ENCODE measurements at regions of chr7 and their contacts with region 1.

Region 1: DNA sequence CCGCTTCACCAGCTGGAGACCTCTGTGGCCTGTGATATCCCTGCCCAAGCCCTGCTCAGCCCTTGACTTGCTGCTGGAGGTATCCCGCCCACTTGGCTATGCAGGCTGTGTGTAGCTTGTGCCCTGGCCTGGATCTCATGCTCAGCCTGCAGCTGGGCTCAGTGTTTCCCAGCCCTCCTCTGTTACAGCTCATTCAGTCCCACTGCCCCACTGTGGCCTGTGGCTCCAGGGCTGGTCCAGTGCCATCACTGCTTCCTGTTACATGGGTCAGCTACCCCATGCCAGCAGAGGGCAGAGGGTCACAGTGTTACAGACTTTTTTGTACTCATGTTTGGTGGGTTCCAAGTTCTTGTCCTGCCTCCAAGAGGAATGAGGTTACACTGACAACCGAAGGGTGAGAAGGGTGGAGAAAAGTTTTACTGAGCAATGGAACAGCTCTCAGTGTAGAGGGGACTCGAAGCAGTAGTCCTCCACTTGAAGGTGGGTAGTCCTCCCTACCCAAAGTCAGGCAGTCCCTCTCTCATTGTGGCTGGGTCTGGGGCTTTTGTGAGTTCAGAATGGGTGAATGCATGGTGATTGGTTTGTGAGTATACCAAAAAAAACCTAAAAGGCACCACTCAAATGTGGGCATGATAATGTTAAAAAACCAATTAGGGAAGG is 100.4 kb downstream of the ANKRD7 start:
- DNase-seq: no peak
- H3K4me3 Mint-ChIP-seq: no peak overlapping the region
- H3K27ac Mint-ChIP-seq: no peak overlapping the region
- H3K4me1 Mint-ChIP-seq: peaks cover 5% of the 10 kb centered on the region
- H3K27me3 Mint-ChIP-seq: peaks cover 11% of the 10 kb centered on the region

Region 2: DNA sequence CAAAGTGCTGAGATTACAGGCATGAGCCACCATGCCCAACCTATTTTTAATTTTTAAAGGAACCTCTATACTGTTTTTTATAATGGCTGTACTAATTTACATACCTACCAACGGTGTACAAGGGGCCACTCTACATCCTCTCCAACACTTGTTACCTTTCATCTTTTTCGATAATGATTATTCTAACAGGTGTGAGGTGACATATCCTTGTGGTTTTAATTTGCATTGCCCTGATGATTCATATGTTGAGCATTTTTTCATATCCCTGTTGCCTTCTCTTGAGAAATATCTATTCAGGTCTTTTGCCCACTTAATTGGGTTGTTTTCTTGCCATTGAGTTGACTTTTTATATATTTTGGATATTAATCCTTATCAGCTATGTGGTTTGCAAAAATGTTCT is 618.7 kb before region 1 on chr7:
- intact Hi-C with region 1: no loop called
- DNase-seq: no peak
- H3K4me3 Mint-ChIP-seq: no peak overlapping the region
- H3K27ac Mint-ChIP-seq: no peak overlapping the region
- H3K4me1 Mint-ChIP-seq: no peaks in the 10 kb centered on the region
- H3K27me3 Mint-ChIP-seq: peaks cover 2% of the 10 kb centered on the region

Region 3: GRCh38 chr7:118288098-118288497 is 36.8 kb before region 1 on chr7:
- intact Hi-C with region 1: loop called (anchors 5 kb)
- DNase-seq: peak; percentile 12
- H3K4me3 Mint-ChIP-seq: peak overlapping the region; percentile 27
- H3K27ac Mint-ChIP-seq: peak overlapping the region; percentile 84
- H3K4me1 Mint-ChIP-seq: peaks cover 25% of the 10 kb centered on the region
- H3K27me3 Mint-ChIP-seq: peaks cover 25% of the 10 kb centered on the region

Region 4: DNA sequence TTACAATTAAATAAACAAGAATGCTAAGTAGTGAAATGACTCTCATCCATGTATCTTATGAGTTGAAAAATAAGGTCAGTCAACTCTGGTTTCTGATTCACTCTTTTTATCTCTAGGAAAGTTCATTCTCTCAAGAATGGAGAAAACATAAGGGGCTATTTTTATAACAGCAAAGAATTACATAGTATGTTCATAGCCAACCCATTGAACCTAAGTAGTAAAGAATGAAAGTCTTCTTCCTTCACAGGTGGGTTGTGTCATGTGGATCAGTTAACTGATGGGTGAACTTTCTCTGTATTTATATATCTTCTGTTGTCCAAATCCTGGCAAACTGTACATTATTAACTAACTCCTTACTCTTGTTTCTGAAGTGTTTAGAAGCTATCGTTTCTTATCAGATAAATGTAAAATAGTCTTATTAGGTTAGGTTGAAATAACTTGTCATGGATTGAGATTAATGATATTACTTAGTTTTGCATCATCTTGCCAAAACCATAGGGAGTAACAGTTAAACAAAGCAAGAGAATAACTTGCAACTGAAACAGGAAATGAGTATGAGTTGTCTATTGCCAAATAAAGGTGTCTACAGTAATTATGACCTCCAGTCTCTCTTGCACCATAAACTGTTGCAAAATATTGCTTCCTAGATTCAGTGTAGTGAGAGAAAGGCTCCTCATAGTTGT is 13.7 kb before region 1 on chr7:
- intact Hi-C with region 1: no loop called
- DNase-seq: no peak
- H3K4me3 Mint-ChIP-seq: no peak overlapping the region
- H3K27ac Mint-ChIP-seq: peak overlapping the region; percentile 78
- H3K4me1 Mint-ChIP-seq: peaks cover 35% of the 10 kb centered on the region
- H3K27me3 Mint-ChIP-seq: no peaks in the 10 kb centered on the region

Measured in activated T-helper 1 cell treated with anti-CD3 and anti-CD28 coated beads, Interleukin-12 subunit alpha, Interleukin-12 subunit beta, Interleukin-2, Interleukin-4 antibody, amounts not matched to agents 30 ng/mL and 10 ng/mL and 1 ng/mL, durations not matched to agents 14 hours and 24 hours and 36 hours (primary cell).